Posterior cingulate gyrus (tissue), 11 donors: ENCODE measurements at regions of chr6 and their contacts with region 1.

Region 1: DNA sequence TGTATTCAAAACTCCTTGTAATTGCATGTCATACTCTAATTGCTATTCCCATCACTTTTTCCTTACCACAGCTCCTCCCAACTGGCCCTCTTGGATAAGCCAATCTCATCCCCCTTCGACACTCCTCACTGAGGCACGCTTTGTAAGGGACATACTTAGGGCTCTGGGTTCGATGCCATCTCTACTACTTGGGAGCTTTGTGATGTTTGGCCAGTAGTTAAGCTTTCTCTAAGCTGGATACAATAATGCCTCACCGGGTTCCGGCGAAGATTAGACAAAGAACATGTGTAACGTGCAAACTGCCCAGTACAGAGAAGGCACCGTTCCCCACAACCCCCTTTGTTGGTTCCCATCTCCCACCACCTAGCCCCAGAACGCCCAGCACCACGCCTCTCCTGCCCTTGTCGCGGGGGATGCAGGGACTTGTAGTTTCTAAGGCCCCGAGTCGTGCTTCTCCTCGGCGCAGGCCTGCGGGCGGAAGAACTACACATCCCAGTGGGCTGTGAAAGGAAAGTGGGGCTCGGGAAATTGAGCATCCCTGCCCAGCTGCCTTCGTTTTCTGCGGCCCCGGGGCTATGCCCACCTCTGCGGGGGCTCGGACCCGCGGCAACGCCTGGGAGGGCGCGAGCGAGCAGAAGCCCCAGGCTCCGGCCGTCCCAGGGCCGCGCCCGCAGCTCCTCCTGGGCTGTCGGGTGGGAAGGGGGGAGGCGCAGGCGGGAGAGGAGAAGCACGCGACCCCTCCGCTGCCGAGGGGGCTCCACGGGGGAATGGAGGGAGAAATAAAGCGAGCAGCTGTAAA is 1.1 kb upstream of the ZDHHC14 start:
- DNase-seq: peak; percentile 87 to 99 (median 94)

Region 2: GRCh38 chr6:157314705-157315321 is 65.0 kb before region 1 on chr6:
- intact Hi-C with region 1: loop called (anchors 2 kb)
- DNase-seq: no peak

Region 3: GRCh38 chr6:157323255-157323965 is 56.4 kb before region 1 on chr6 and contains the start of gene TMEM242:
- intact Hi-C with region 1: loop called (anchors 2 kb)
- DNase-seq: peak; percentile 87 to 98 (median 90)

Region 4: GRCh38 chr6:157461000-157461915 is 81.4 kb after region 1 on chr6:
- intact Hi-C with region 1: loop called (anchors 5 kb)
- DNase-seq: peak in 1 of 10 donors; percentile 33